ENCODE measurements at regions of chr12 and their contacts with region 1.

Region 1: DNA sequence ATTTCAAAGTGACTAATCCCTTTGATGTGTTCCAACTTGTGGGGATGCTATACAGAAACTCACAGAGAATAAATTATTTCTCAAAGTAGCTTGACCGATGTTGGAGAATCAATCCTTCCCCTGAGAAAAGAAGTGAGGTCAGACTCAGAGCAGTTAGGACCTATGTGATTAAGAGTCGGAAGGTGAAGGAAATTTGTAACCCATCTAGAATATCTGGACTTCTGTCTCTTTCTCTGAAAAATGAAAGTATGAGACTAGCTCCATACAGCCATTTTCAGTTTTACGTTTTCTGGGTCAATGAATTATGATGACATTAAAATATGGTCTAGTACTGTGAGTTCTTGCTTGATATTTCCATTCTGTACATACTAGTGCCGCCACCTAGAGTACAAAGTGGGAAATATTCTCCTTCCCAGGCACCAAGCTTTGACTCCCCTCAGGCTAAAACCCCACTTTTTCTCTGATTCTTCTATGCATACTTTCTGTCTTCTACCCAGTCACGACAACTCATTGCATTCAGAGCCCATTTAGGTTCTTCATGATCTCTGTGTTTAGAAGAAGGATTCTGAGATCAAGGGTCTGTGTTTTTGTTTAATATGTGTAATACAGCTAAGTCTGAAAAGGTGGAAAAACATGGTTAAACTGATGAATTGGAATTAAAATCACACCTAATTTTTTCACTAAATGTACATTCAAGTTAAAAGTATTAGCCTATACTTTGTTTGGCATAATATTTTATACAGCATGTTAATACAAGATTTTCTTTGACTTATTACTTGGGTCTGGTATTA is 6.9 kb upstream of the NTS start:
- DNase-seq: no peak
- H3K4me3 ChIP-seq: no peak overlapping the region
- H3K27ac ChIP-seq: peak overlapping the region; percentile 19
- H3K4me1 ChIP-seq: no peaks in the 10 kb centered on the region
- H3K27me3 ChIP-seq: no peaks in the 10 kb centered on the region
- CTCF ChIP-seq: peak; percentile 87

Region 2: DNA sequence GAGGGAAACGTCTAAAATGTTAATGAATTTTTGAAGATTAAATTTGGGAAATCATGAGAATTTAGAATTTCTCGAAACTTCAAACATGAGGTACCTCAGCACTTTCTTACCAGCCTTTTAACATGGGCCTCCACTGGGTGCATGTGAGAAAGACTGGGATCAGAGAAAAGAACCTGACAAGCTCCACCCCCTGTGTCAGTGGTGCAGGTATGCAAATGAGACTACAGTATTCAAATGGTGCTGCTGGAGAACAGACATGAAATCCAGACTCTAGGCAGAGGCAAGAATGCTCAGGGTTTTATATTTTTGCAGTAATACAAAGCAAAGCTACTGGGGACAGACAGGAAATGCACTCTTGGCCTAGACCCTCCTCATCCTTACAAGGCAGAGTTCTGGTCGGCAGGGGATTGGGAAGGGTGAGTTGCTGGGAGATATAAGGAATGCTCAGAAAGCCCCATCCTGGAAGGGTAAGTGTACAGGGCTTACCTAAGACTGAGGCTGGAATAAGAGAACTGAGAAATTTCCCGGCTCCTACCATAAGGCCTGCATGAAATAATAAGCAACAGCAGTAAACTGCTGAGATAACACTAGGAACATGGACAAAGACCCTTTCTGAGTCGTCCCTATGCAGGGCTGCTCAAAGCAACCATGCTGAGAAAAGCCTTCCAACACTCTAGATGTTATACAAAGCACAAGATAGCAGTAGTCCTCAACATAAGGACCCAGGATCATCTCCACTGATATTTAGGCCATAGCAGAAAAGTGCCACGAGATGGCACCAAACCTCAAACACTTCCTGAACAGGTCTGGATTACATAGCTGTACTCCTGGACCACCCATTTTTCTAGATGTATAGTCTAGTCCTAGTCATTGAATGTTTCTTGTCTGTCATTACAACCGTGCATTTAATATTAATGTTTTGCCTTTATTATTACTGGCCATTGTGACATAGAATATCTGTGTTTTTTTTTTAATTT is 291.8 kb before region 1 on chr12:
- intact Hi-C with region 1: loop called (anchors 2 kb)
- DNase-seq: peak; percentile 28
- H3K4me3 ChIP-seq: no peak overlapping the region
- H3K27ac ChIP-seq: no peak overlapping the region
- H3K4me1 ChIP-seq: no peaks in the 10 kb centered on the region
- H3K27me3 ChIP-seq: no peaks in the 10 kb centered on the region
- CTCF ChIP-seq: peak; percentile 83

Region 3: DNA sequence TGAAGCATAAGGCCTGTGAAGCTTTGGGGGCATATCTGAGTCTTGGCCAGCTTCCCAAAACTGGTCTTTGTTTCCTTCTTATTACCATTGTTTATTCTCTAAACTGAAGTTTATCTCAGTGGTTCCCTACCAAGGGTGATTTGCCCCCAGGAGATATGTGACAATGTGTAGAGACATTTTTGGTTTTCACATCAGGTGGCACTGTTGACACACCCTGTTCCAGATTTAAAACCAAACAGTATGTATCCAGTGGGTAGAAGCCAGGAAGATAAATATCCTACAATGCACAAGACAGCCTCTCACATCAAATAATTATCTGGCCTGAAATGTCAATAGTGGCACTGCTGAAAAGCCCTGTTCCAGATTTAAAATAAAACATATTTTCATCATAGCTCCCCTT is 53.1 kb before region 1 on chr12:
- intact Hi-C with region 1: loop called (anchors 10 kb)
- DNase-seq: no peak
- H3K4me3 ChIP-seq: no peak overlapping the region
- H3K27ac ChIP-seq: no peak overlapping the region
- H3K4me1 ChIP-seq: peaks cover 26% of the 10 kb centered on the region
- H3K27me3 ChIP-seq: no peaks in the 10 kb centered on the region
- CTCF ChIP-seq: no peak

Region 4: GRCh38 chr12:85971800-85972199 is 104.6 kb after region 1 on chr12:
- intact Hi-C with region 1: no loop called
- DNase-seq: no peak
- H3K4me3 ChIP-seq: no peak overlapping the region
- H3K27ac ChIP-seq: no peak overlapping the region
- H3K4me1 ChIP-seq: no peaks in the 10 kb centered on the region
- H3K27me3 ChIP-seq: no peaks in the 10 kb centered on the region
- CTCF ChIP-seq: no peak